H1 (cell line): ENCODE measurements at regions of chr12 and their contacts with region 1.

Region 1: GRCh38 chr12:22866406-22866805 is 241.4 kb downstream of the ETNK1 start:
- DNase-seq: no peak
- H3K4me3 ChIP-seq: no peak overlapping the region
- H3K27ac ChIP-seq: no peak overlapping the region
- H3K4me1 ChIP-seq: no peaks in the 10 kb centered on the region; a peak in 1 of 7 replicates
- H3K27me3 ChIP-seq: no peaks in the 10 kb centered on the region
- CTCF ChIP-seq: no peak
- EP300 ChIP-seq: no peak
- POLR2A ChIP-seq: no peak
- RAD21 ChIP-seq: no peak

Region 2: GRCh38 chr12:22850185-22850584 is 16.2 kb before region 1 on chr12:
- CTCF ChIA-PET with region 1: no interaction called
- POLR2A ChIA-PET with region 1: no interaction called
- DNase-seq: no peak
- H3K4me3 ChIP-seq: no peak overlapping the region
- H3K27ac ChIP-seq: no peak overlapping the region
- H3K4me1 ChIP-seq: peaks cover 0 to 3% (median under 1%) of the 10 kb centered on the region in 4 experiments; a peak in 2 of 7 replicates
- H3K27me3 ChIP-seq: no peaks in the 10 kb centered on the region
- CTCF ChIP-seq: no peak
- EP300 ChIP-seq: no peak
- POLR2A ChIP-seq: no peak
- RAD21 ChIP-seq: no peak

Region 3: GRCh38 chr12:23055004-23055403 is 188.6 kb after region 1 on chr12:
- CTCF ChIA-PET with region 1: interaction called, 108 read pairs
- POLR2A ChIA-PET with region 1: interaction called, 3 read pairs
- DNase-seq: peak; percentile 38 to 71
- H3K4me3 ChIP-seq: no peak overlapping the region
- H3K27ac ChIP-seq: no peak overlapping the region
- H3K4me1 ChIP-seq: no peaks in the 10 kb centered on the region
- H3K27me3 ChIP-seq: peaks cover 0 to 1% (median 0%) of the 10 kb centered on the region in 4 experiments; a peak in 1 of 7 replicates
- CTCF ChIP-seq: peak; percentile 54 to 88 (median 78)
- EP300 ChIP-seq: no peak
- POLR2A ChIP-seq: no peak
- RAD21 ChIP-seq: peak; percentile 97